CD14-positive monocyte (primary cell): ENCODE measurements at regions of chr16 and their contacts with region 1.

Region 1: DNA sequence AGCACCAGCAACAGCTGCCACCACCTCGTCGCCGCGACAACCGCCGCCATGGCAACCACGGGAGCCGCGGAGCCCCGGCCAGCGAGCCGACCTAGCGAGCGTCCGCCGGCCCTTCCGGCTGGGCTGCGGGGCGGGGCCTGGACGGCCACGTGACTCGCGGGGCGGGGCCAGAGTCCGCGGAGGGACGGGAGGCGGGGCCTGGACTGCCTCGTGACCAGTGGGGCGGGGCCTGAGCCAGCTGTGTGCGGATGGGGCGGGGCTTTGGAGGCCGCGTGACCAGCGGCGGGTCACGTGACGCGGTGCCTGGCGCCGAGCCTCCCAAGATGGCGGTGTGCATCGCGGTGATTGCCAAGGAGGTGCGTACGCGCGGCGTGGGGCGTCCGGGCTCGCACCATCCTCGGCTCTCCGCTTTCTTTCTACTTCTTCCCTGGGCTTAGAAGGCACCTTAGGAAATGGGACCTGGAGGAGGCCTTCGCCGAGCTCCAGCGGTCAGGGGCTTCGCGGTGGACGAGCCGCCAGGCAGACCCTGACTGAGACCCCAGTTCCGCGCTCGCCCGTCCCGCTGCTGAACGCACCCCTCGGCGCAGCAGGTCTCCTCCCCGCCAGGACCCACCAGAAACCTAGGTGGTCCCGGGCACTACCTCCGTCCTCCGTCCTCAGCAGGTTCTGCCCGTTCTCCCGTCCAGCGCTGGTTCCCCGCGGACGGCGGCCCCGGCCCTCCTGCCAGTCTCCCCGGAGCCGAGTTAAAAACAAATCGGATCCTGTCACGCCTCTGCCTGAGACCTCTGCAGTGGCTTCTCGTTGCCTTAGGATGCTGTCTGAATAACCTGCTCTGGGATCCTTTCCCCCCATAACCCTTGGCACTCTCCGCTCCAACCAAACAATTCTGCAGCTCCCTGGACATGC is at the starts of genes GALNS and TRAPPC2L:
- DNase-seq: peak; percentile 95 to 97 (median 95)
- H3K4me3 ChIP-seq: peak within 1 kb of the TSS; percentile 73 to 99 (median 95)
- H3K4me3 Mint-ChIP-seq: peak within 1 kb of the TSS; percentile 95 to 98
- H3K27ac ChIP-seq: peak within 1 kb of the TSS; percentile 70 to 87
- H3K27ac Mint-ChIP-seq: peak within 1 kb of the TSS; percentile 89 to 96 (median 90)
- H3K4me1 ChIP-seq: peaks cover 46 to 52% of the 10 kb centered on the region in 2 donors
- H3K4me1 Mint-ChIP-seq: peaks cover 56% of the 10 kb centered on the region
- H3K27me3 ChIP-seq: no peaks in the 10 kb centered on the region
- H3K27me3 Mint-ChIP-seq: peaks cover 0 to 2% (median 0%) of the 10 kb centered on the region in 3 donors
- CTCF ChIP-seq: no peak
- polyA plus RNA-seq, gene GALNS: 20.2 to 34.4 (median 32.2) TPM
- polyA plus RNA-seq, gene TRAPPC2L: 38.8 to 89.3 (median 82.4) TPM

Region 2: DNA sequence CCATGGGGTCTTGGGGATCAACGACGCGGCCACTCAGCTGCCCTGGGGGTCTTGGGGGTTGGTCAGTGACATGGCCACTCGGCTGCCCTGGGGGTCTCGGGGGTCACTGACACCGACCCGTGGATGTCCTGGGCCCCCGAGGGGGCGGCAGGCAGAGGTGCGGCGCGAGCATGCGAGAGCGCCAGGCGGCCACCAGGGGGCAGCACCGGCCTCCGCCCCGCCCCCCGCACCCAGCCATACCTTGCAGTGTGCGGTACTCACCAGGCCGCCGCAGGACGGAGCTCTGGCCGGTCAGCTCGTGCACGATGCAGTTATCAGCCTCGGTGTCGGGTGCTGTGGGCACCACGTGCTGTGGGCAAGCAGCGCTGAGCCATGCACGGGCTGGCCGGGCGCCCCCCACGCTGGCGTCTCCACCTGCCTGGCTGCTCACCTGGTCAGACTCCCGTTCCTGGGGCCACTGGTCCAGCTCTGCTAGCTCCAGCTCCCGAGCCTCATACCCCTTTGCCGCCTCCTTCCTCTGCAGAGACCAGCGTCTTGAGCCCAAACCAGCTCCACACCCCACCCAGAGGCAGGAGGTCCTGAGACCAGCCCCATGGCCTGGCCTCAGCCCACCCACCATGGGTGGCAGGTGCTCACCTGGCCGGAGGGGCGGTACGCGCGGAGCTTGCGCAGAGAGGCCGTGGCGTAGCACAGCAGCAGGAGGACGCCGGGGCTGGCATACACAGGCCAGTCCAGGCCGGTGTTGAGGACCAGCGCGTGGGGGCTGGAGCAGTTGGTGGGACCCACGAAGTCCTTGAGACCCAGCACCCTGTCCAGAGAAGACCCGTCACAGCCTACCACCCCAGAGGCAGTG is 119.6 kb before region 1 on chr16:
- intact Hi-C with region 1: loop called (anchors 5 kb)
- DNase-seq: peak; percentile 64 to 79 (median 78)
- H3K4me3 ChIP-seq: no peak overlapping the region
- H3K4me3 Mint-ChIP-seq: no peak overlapping the region
- H3K27ac ChIP-seq: no peak overlapping the region
- H3K27ac Mint-ChIP-seq: no peak overlapping the region
- H3K4me1 ChIP-seq: no peaks in the 10 kb centered on the region
- H3K4me1 Mint-ChIP-seq: no peaks in the 10 kb centered on the region
- H3K27me3 ChIP-seq: no peaks in the 10 kb centered on the region
- H3K27me3 Mint-ChIP-seq: no peaks in the 10 kb centered on the region
- CTCF ChIP-seq: peak; percentile 100

Region 3: GRCh38 chr16:88785106-88785924 is 71.8 kb before region 1 on chr16 and contains the start of gene PIEZO1:
- intact Hi-C with region 1: loop called in 1 of 2 experiments (anchors 5 kb)
- DNase-seq: peak; percentile 62 to 75 (median 71)
- H3K4me3 ChIP-seq: peak within 1 kb of the TSS; percentile 47 to 80 (median 73)
- H3K4me3 Mint-ChIP-seq: peak within 1 kb of the TSS; percentile 90 to 93
- H3K27ac ChIP-seq: peak within 1 kb of the TSS; percentile 86 to 99
- H3K27ac Mint-ChIP-seq: peak within 1 kb of the TSS in 6 of 7 donors; percentile 87 to 95 (median 90)
- H3K4me1 ChIP-seq: peaks cover 56 to 64% of the 10 kb centered on the region in 2 donors
- H3K4me1 Mint-ChIP-seq: peaks cover 48% of the 10 kb centered on the region
- H3K27me3 ChIP-seq: no peaks in the 10 kb centered on the region
- H3K27me3 Mint-ChIP-seq: peaks cover 0 to 3% (median 0%) of the 10 kb centered on the region in 3 donors
- CTCF ChIP-seq: peak; percentile 97
- polyA plus RNA-seq, gene PIEZO1: 10.2 to 405 (median 15.0) TPM

Region 4: GRCh38 chr16:88811769-88812512 is 45.1 kb before region 1 on chr16 and contains the start of gene APRT:
- intact Hi-C with region 1: loop called (anchors 2 kb)
- DNase-seq: peak; percentile 85 to 90 (median 89)
- H3K4me3 ChIP-seq: peak within 1 kb of the TSS; percentile 48 to 83 (median 58)
- H3K4me3 Mint-ChIP-seq: peak within 1 kb of the TSS; percentile 82 to 91
- H3K27ac ChIP-seq: peak within 1 kb of the TSS; percentile 71 to 93
- H3K27ac Mint-ChIP-seq: peak within 1 kb of the TSS; percentile 73 to 92 (median 91)
- H3K4me1 ChIP-seq: peaks cover 35 to 42% of the 10 kb centered on the region in 2 donors
- H3K4me1 Mint-ChIP-seq: peaks cover 28% of the 10 kb centered on the region
- H3K27me3 ChIP-seq: no peaks in the 10 kb centered on the region
- H3K27me3 Mint-ChIP-seq: peaks cover 0 to 2% (median 0%) of the 10 kb centered on the region in 3 donors
- CTCF ChIP-seq: no peak
- polyA plus RNA-seq, gene APRT: 123 to 307 (median 233) TPM

Region 5: GRCh38 chr16:89009311-89010209 is 152.5 kb after region 1 on chr16:
- intact Hi-C with region 1: no loop called
- DNase-seq: peak in 2 of 3 donors; percentile 16 to 18
- H3K4me3 ChIP-seq: no peak overlapping the region
- H3K4me3 Mint-ChIP-seq: no peak overlapping the region
- H3K27ac ChIP-seq: no peak overlapping the region
- H3K27ac Mint-ChIP-seq: peak overlapping the region in 1 of 7 donors; percentile 64
- H3K4me1 ChIP-seq: no peaks in the 10 kb centered on the region
- H3K4me1 Mint-ChIP-seq: peaks cover 2% of the 10 kb centered on the region
- H3K27me3 ChIP-seq: peaks cover 0 to 16% of the 10 kb centered on the region in 2 donors
- H3K27me3 Mint-ChIP-seq: peaks cover 19 to 41% (median 28%) of the 10 kb centered on the region in 3 donors
- CTCF ChIP-seq: no peak

Region 6: DNA sequence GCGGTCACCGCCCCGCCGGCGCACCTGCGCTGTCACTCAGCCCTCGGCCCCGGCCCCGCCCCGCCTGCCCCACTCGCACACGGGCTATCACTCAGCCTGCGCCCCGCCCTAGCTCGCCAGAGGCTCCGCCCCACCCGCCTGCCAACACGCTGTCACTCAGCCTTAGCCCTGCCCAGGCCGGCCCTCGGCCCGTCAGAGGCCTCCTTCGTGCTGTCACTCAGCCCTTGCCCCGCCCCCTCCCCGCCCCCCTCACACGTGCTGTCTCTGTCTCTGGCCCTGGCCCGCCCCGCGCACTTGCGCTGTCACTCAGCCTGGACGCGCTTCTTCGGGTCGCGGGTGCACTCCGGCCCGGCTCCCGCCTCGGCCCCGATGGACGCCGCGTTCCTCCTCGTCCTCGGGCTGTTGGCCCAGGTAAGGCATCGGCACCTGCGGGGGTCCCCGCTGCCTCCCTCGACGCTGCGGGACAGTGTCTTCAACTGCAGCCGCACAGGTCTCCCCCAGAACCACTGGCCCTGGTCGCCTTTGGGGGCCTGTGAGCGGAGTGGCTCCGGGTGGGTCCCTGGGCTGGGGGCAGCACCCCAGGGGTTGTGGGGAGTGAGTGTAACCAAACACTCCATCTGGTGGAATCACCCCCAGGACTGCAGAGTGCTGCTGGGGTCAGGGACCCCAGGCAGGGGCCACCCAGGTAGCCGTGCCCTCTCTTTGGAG is 314.5 kb after region 1 on chr16 and contains the start of gene CDH15:
- intact Hi-C with region 1: loop called (anchors 5 kb)
- DNase-seq: peak; percentile 88 to 95 (median 95)
- H3K4me3 ChIP-seq: peak within 1 kb of the TSS in 1 of 3 experiments; percentile 44
- H3K4me3 Mint-ChIP-seq: peak within 1 kb of the TSS; percentile 51 to 86
- H3K27ac ChIP-seq: no peak within 1 kb of the TSS
- H3K27ac Mint-ChIP-seq: peak within 1 kb of the TSS in 3 of 7 donors; percentile 33 to 75 (median 51)
- H3K4me1 ChIP-seq: peaks cover 18 to 24% of the 10 kb centered on the region in 2 donors
- H3K4me1 Mint-ChIP-seq: peaks cover 6% of the 10 kb centered on the region
- H3K27me3 ChIP-seq: peaks cover 0 to 40% of the 10 kb centered on the region in 2 donors
- H3K27me3 Mint-ChIP-seq: peaks cover 8 to 61% (median 17%) of the 10 kb centered on the region in 3 donors
- CTCF ChIP-seq: no peak
- polyA plus RNA-seq, gene CDH15: not detected

Region 7: DNA sequence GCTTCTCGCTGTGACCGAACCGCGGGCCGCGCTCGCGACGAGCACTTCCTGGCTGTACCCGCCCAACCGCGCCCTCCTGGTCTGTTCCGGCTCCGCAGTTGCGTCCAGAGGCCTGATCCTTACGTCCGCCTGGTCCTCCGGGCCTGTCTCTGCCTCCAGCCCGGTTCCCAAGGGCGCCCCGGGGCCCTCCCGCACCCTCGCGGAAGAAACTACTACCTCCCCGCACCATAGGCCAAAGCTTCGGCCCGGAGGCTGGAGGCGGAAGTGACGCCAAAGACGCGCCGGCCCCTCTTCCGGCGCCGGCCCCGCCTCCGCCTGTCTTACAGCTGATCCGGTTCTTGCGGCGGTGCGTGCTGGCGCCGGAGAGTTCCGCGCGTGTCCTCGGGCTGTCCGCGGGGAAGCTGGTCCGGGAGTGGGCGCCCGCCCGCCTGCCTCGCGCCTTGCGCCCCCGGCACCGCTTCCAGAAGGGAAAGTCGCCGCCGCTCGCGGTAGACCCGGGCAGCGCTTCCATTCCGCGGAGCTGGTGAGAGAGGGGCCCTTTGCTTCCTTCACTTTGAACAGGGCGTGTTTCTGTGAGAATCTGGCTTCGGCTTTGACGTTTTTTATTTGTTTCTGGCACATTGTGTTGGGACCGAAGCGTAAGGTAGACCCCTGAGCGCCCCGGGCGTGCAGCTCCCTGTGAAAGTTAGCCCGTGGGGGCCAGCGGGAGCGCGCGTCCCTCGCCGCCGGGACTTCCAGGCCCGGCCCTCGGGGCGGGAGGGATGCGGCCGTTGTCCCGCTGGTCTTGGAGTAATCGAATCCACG is 360.5 kb after region 1 on chr16 and contains the start of gene ZNF778:
- intact Hi-C with region 1: loop called in 1 of 2 experiments (anchors 10 kb)
- DNase-seq: peak; percentile 84 to 87 (median 87)
- H3K4me3 ChIP-seq: peak within 1 kb of the TSS; percentile 56 to 93 (median 61)
- H3K4me3 Mint-ChIP-seq: peak within 1 kb of the TSS; percentile 88 to 91
- H3K27ac ChIP-seq: peak within 1 kb of the TSS; percentile 68 to 94
- H3K27ac Mint-ChIP-seq: peak within 1 kb of the TSS; percentile 90 to 97 (median 93)
- H3K4me1 ChIP-seq: peaks cover 16 to 19% of the 10 kb centered on the region in 2 donors
- H3K4me1 Mint-ChIP-seq: peaks cover 17% of the 10 kb centered on the region
- H3K27me3 ChIP-seq: no peaks in the 10 kb centered on the region
- H3K27me3 Mint-ChIP-seq: peaks cover 0 to 1% (median 0%) of the 10 kb centered on the region in 3 donors
- CTCF ChIP-seq: no peak
- polyA plus RNA-seq, gene ZNF778: 0.51 to 9.0 (median 0.60) TPM

Region 8: DNA sequence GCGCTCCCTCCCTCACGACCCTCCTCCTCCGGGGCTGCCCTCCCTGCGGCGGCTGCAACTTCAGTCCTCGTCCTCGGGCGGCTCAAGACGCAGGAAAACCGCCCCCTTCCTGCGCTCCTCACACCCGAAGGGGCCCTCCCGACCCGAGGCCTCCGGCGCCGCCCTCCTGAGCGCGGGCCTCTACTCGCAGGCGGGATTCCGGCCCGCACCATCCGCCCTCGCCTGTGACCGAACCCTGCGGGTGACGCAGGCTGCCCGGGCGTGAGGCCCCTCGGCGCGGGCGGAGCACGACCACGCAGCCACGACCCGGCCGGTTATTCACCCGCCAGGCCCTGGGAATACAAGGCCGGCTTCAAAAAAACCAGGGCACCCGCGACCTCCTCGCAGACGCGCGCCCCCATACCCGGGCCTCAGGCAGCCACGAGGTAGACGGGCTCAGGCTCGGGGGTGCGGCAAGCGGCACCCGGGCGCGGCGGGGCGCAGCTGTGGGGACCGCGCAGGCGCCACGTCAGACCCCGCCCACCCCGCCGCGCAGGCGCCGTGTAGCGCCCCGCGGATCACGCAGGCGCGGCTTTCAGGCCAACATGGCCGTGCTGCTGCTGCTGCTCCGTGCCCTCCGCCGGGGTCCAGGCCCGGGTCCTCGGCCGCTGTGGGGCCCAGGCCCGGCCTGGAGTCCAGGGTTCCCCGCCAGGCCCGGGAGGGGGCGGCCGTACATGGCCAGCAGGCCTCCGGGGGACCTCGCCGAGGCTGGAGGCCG is 650.9 kb after region 1 on chr16 and contains the start of gene SPG7:
- intact Hi-C with region 1: loop called in 1 of 2 experiments (anchors 10 kb)
- DNase-seq: peak; percentile 78 to 85 (median 84)
- H3K4me3 ChIP-seq: peak within 1 kb of the TSS; percentile 61 to 88 (median 86)
- H3K4me3 Mint-ChIP-seq: peak within 1 kb of the TSS; percentile 80 to 85
- H3K27ac ChIP-seq: peak within 1 kb of the TSS; percentile 66 to 90
- H3K27ac Mint-ChIP-seq: peak within 1 kb of the TSS; percentile 63 to 91 (median 89)
- H3K4me1 ChIP-seq: peaks cover 38 to 49% of the 10 kb centered on the region in 2 donors
- H3K4me1 Mint-ChIP-seq: peaks cover 38% of the 10 kb centered on the region
- H3K27me3 ChIP-seq: no peaks in the 10 kb centered on the region
- H3K27me3 Mint-ChIP-seq: no peaks in the 10 kb centered on the region
- CTCF ChIP-seq: no peak
- polyA plus RNA-seq, gene SPG7: 30.3 to 120 (median 34.4) TPM